Endothelial cell of umbilical vein (primary cell): ENCODE measurements at regions of chr3 and their contacts with region 1.

Region 1: DNA sequence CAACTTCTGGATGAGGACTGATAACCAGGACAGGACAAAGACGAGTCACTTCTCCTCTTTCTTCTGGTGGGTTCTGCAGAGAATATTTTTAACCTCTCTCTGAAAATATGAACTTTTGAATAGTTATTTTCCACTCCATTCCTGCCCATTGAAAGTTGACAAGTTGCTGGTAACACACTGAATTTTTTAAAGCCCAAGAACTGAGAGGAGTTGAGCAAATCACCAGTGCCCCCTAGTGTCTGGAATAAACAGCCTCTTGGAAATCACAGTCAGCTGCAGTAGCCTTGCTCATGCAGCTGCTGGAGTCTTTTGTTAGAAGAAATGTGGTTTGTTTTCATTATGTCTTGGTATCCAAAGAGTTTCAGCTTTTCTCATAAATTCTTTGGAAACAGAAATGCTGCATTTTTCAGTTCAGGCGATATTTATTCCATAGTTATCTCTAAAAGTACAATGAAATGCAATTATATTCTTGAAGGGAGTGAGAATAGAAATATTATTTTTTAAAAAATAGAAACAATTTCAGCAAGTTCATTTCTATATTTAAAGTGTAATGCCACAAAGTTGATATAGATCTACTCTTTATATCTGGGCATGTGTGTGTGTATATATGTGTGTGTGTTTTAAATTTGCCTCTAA is 741.0 kb upstream of the CBLB start:
- DNase-seq: peak; percentile 92
- H3K4me3 ChIP-seq: no peak overlapping the region
- H3K27ac ChIP-seq: no peak overlapping the region
- H3K4me1 ChIP-seq: peaks cover 18% of the 10 kb centered on the region
- H3K27me3 ChIP-seq: no peaks in the 10 kb centered on the region
- CTCF ChIP-seq: peak; percentile 75 to 90
- POLR2A ChIP-seq: no peak

Region 2: DNA sequence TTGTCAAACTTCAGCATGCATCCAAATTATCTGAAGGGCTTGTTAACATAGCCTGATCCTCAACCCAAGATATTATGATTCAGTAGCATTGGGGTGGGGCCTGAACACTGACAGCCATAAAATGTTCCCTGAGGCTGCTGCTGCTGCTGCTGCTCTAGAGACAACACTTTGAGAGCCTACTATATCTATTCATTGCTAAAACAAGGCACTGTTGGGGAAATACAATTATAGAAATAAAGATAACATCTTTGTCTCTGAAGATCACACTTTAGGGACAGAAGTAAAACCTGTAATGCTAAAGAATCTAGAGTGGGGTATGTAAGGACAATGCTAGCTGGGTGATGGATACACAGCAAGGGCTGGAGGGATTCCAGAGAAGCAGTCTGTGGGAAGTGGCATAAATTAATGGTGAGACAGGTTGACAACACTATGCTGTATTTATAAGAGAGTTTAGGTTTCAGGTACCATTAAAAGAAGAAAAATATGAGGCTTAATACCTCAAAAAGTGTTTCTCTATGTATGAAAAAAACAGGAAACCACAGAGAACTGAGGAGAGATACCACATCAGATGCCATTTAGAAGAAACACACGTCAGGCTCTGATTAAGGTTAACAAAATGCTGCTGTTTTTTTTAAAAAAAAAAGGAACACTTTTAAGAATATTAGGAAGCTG is 856.9 kb before region 1 on chr3:
- CTCF ChIA-PET with region 1: no interaction called
- POLR2A ChIA-PET with region 1: no interaction called
- dilution Hi-C with region 1: no loop called
- intact Hi-C with region 1: loop called (anchors 10 kb)
- DNase-seq: no peak
- H3K4me3 ChIP-seq: no peak overlapping the region
- H3K27ac ChIP-seq: no peak overlapping the region
- H3K4me1 ChIP-seq: peaks cover 6% of the 10 kb centered on the region
- H3K27me3 ChIP-seq: no peaks in the 10 kb centered on the region
- CTCF ChIP-seq: no peak
- POLR2A ChIP-seq: no peak

Region 3: GRCh38 chr3:106206146-106206545 is 403.6 kb before region 1 on chr3:
- CTCF ChIA-PET with region 1: interaction called, 10 read pairs
- POLR2A ChIA-PET with region 1: no interaction called
- dilution Hi-C with region 1: no loop called
- intact Hi-C with region 1: no loop called
- DNase-seq: peak; percentile 83
- H3K4me3 ChIP-seq: peak overlapping the region in 1 of 3 experiments; percentile 35
- H3K27ac ChIP-seq: peak overlapping the region; percentile 32
- H3K4me1 ChIP-seq: peaks cover 16% of the 10 kb centered on the region
- H3K27me3 ChIP-seq: no peaks in the 10 kb centered on the region
- CTCF ChIP-seq: no peak
- POLR2A ChIP-seq: no peak

Region 4: DNA sequence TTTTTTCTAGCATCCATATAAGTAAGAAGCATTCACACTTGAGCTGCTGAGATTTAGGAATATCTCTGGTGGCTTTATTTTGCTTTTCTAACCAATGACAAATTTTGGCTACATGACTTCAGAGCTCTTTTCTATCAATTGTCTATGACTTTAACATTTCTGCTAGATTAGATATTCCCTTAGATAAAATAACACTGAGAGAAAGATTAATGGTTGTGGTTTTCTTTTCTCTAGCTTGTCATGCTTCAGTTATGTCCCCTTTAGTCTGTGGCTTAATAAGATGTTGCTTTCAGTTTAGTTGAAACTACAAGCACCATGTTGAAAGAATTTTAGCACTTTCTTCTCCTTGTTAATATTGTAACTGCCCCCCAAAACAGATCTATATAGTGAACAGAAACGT is 101.9 kb after region 1 on chr3:
- CTCF ChIA-PET with region 1: no interaction called
- POLR2A ChIA-PET with region 1: no interaction called
- dilution Hi-C with region 1: no loop called
- intact Hi-C with region 1: no loop called
- DNase-seq: no peak
- H3K4me3 ChIP-seq: no peak overlapping the region
- H3K27ac ChIP-seq: no peak overlapping the region
- H3K4me1 ChIP-seq: no peaks in the 10 kb centered on the region
- H3K27me3 ChIP-seq: no peaks in the 10 kb centered on the region
- CTCF ChIP-seq: no peak
- POLR2A ChIP-seq: no peak

Region 5: DNA sequence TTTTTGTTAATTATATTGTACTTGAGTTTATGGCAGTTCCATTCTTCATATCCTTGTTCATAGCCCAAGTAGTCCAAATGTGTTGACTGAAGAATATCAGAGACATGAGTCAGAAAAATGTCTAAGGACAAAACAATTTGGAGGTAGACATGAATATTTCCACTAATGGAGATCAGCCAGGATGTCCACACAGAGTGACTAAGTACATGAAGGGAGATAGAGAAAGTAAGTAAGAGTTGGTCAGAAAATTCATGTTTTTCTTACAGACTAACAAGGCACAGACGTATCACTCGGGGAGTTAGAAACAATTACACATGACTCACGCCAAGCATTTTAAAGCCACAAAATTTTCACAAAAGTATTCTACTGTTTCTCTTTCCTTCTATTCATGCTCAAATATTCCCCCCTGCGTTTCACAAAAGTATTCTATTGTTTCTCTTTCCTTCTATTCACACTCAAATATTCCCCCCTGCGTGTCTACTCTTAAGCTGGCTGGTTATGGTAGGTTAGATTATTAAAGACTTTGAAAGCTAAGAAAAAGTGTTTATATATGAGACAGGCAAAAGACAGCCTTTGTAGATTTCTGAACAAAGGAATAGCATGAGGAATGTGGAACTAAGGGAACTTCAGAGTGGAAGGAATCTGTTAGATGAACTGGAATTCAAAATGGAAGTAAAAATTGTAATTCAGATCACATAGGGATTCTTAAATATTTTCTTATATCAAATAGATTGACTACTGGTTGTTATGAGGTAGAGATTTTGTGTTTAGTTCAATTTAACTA is 118.7 kb after region 1 on chr3:
- CTCF ChIA-PET with region 1: interaction called, 7 read pairs
- POLR2A ChIA-PET with region 1: no interaction called
- dilution Hi-C with region 1: no loop called
- intact Hi-C with region 1: loop called (anchors 1 kb)
- DNase-seq: peak; percentile 96
- H3K4me3 ChIP-seq: peak overlapping the region in 1 of 3 experiments; percentile 41
- H3K27ac ChIP-seq: peak overlapping the region; percentile 96
- H3K4me1 ChIP-seq: peaks cover 45% of the 10 kb centered on the region
- H3K27me3 ChIP-seq: no peaks in the 10 kb centered on the region
- CTCF ChIP-seq: no peak
- POLR2A ChIP-seq: no peak

Region 6: GRCh38 chr3:106862067-106862466 is 252.3 kb after region 1 on chr3:
- CTCF ChIA-PET with region 1: interaction called, 56 read pairs
- POLR2A ChIA-PET with region 1: no interaction called
- dilution Hi-C with region 1: no loop called
- intact Hi-C with region 1: loop called (anchors 1 kb)
- DNase-seq: peak; percentile 79
- H3K4me3 ChIP-seq: no peak overlapping the region
- H3K27ac ChIP-seq: peak overlapping the region; percentile 2
- H3K4me1 ChIP-seq: peaks cover 13% of the 10 kb centered on the region
- H3K27me3 ChIP-seq: no peaks in the 10 kb centered on the region
- CTCF ChIP-seq: peak; percentile 29 to 41
- POLR2A ChIP-seq: no peak